ENCODE measurements at regions of chr3 and their contacts with region 1.

Region 1: DNA sequence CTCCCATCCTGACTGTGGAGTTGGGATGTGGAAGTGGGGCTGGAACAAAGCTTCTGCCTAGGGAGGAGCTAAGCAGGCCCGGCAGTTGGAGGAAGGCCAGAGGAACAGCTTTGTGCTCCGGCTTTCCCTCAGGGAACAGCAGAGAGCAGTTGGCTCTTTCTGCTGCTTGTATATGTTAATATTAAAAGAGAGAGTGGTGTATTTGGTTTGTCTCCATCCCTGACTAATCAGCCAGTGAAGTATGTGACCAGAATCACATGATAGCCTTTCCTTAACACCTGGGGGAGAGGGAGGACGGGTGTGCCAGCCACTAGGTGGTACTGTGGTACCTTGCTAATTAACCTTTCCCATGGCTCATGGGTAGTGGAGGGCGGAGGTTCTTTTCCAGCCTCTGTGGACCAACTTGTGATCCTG is 10.0 kb downstream of the EIF2B5 start:
- DNase-seq: peak; percentile 40 to 57 (median 54)
- H3K4me3 ChIP-seq: no peak overlapping the region
- H3K27ac ChIP-seq: peak overlapping the region in 1 of 2 experiments; percentile 15
- H3K4me1 ChIP-seq: no peaks in the 10 kb centered on the region
- H3K27me3 ChIP-seq: no peaks in the 10 kb centered on the region

Region 2: GRCh38 chr3:184133840-184134731 is 11.0 kb before region 1 on chr3:
- CTCF ChIA-PET with region 1: interaction called, 10 read pairs
- POLR2A ChIA-PET with region 1: no interaction called
- DNase-seq: peak; percentile 68 to 76 (median 71)
- H3K4me3 ChIP-seq: peak overlapping the region; percentile 78 to 99 (median 98)
- H3K27ac ChIP-seq: peak overlapping the region in 1 of 2 experiments; percentile 92
- H3K4me1 ChIP-seq: peaks cover 14 to 29% (median 21%) of the 10 kb centered on the region in 4 experiments
- H3K27me3 ChIP-seq: no peaks in the 10 kb centered on the region

Region 3: DNA sequence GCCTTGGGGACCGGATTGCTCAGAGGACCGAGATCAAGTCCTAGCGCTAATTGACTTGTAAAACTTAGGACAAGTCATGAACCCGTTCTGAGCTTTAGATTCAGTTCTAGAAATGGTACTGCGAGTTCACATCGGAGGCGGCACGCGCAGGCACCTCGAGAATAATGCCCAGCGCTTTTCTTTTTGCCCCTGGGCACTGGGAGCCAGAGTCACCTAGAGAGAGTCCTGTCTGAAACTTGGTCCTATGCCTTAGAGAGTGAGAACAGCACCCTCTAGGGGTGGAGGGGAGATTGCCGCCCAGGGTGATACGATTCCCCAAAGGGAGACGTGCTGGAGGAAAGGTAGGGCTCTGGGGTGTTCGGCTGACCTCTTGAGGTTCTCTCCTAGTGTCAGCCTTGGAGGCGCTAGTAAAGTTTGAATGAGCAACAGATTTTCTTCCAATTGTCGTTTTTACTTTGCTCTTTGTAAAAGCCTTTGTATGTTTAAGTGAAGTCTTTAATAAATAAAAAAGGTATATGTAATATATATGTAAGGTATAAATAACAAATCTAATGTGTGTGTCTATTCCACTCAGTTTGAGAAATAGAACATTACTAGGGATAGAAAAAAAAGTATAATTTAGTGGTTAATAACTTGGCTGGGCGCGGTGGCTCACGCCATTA is 105.2 kb after region 1 on chr3:
- CTCF ChIA-PET with region 1: interaction called, 14 read pairs
- POLR2A ChIA-PET with region 1: no interaction called
- DNase-seq: peak; percentile 90 to 94 (median 92)
- H3K4me3 ChIP-seq: peak overlapping the region; percentile 76 to 100 (median 89)
- H3K27ac ChIP-seq: peak overlapping the region; percentile 25 to 92
- H3K4me1 ChIP-seq: peaks cover 5 to 23% (median 17%) of the 10 kb centered on the region in 4 experiments
- H3K27me3 ChIP-seq: no peaks in the 10 kb centered on the region

Measured in common myeloid progenitor, CD34-positive (primary cell).